Ovary (tissue), 10 donors: ENCODE measurements at regions of chr5 and their contacts with region 1.

Region 1: GRCh38 chr5:172188033-172188892 is at the start of gene STK10:
- DNase-seq: peak; percentile 85 to 91 (median 89)
- H3K4me3 ChIP-seq: peak within 1 kb of the TSS; percentile 91
- H3K27ac ChIP-seq: peak within 1 kb of the TSS; percentile 70 to 73
- H3K4me1 ChIP-seq: no peaks in the 10 kb centered on the region
- H3K27me3 ChIP-seq: no peaks in the 10 kb centered on the region
- CTCF ChIP-seq: peak; percentile 40 to 80 (median 74)
- EP300 ChIP-seq: no peak
- POLR2A ChIP-seq: no peak
- total RNA-seq, gene STK10: 7.6 to 15.5 (median 10.0) TPM

Region 2: DNA sequence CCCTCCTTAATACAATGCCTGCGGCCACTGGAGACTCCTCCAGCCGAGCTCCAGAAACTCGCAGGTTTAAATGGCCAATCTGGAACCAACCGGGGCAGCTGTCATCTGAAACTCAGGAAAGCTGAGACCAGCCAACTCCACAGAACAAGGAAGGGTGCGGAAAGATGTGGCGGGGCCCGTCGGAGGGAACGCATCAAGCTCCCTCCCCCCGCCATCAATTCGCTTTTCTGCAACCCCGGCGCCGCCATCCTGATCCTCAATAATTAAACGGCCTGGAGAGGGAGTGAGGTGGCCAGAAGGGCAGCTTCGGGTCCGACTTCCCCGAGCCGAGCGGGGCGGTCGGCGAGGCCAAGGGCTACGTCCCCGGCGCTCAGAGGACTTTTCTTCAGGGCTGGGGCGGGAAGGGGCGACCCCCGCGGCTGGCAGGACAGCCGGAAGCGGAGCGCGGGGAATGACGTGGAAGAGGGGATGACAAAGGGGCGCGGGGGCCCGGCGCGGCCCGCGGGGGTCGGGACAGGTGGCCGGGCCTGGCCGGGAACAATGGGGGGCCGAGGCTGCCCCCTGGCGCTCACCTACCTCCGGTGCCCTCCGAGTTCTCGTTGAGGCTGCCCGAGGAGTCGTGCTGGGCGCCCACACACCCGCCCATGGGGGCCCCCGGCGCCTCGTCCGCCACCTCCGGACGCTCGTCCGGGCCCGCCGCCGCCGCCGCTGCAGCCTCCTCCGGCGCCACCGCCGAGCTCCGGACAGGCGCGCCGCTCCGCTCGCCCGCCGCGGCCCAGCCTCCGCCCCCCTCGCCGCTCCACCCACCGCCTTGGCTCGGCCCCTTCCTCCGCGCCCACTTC is 95.0 kb after region 1 on chr5 and contains the start of gene UBTD2:
- intact Hi-C with region 1: loop called in 1 of 4 experiments (anchors 5 kb)
- DNase-seq: peak; percentile 82 to 89 (median 85)
- H3K4me3 ChIP-seq: peak within 1 kb of the TSS; percentile 55
- H3K27ac ChIP-seq: peak within 1 kb of the TSS; percentile 86 to 90
- H3K4me1 ChIP-seq: peaks cover 4% of the 10 kb centered on the region
- H3K27me3 ChIP-seq: no peaks in the 10 kb centered on the region
- CTCF ChIP-seq: peak; percentile 27 to 48 (median 38)
- EP300 ChIP-seq: no peak
- POLR2A ChIP-seq: no peak
- total RNA-seq, gene UBTD2: 21.4 to 31.5 (median 28.6) TPM